ENCODE measurements at regions of chr1 and their contacts with region 1.

Region 1: DNA sequence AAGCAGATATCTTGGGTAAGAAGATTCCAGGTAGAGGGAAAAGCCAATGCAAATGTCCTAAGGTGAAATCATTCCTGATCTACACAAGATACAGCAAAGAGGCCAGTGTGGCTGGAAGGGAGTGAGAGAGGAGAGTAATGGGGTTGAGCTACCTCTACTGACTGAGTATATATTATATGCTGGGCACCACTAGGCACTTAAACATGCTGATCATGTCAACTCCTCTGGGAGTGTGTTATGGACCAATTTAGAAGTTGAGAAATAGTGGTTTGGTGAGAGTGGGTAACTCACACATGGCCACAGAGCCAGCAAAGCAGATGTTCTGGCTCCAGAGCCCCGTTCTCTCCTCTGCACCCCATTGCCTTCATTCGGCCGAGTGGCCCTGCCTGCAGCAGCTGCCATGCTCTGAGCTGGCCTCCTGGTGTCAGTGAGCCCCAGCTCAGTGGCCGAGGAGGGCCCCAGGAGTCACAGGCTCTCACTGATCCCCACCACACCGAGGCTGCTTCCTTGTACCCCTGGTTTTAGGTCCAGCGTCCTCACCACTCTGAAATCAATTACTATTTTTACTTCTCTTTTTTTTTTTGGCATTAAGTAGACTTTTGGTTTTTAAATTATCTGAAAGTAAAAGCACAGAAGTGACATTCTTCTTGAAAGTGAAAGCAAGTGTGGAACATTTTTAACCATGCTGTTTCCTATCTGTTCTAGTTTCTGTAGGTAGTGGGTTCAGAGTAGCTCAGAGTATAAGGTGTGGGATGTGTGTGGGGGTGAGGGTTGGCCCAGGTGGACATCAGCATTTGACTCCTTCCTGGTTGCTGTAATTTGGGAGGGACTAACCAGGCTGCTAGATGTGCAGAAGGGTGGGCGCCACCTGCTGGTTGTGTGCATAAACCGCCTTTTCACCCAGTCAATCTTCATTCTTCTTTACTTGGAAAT is 45.8 kb upstream of the CRNN start:
- DNase-seq: peak; percentile 85
- H3K4me3 Mint-ChIP-seq: no peak overlapping the region
- H3K27ac Mint-ChIP-seq: no peak overlapping the region
- H3K4me1 Mint-ChIP-seq: peaks cover 17% of the 10 kb centered on the region
- H3K27me3 Mint-ChIP-seq: no peaks in the 10 kb centered on the region
- CTCF ChIP-seq: peak; percentile 87

Region 2: GRCh38 chr1:152047730-152048402 is 412.0 kb before region 1 on chr1:
- CTCF ChIA-PET with region 1: interaction called, 39 read pairs
- POLR2A ChIA-PET with region 1: interaction called, 4 read pairs
- intact Hi-C with region 1: loop called (anchors 1 kb)
- DNase-seq: peak; percentile 100
- H3K4me3 Mint-ChIP-seq: peak overlapping the region; percentile 62
- H3K27ac Mint-ChIP-seq: peak overlapping the region; percentile 98
- H3K4me1 Mint-ChIP-seq: peaks cover 55% of the 10 kb centered on the region
- H3K27me3 Mint-ChIP-seq: no peaks in the 10 kb centered on the region
- CTCF ChIP-seq: peak; percentile 58

Region 3: DNA sequence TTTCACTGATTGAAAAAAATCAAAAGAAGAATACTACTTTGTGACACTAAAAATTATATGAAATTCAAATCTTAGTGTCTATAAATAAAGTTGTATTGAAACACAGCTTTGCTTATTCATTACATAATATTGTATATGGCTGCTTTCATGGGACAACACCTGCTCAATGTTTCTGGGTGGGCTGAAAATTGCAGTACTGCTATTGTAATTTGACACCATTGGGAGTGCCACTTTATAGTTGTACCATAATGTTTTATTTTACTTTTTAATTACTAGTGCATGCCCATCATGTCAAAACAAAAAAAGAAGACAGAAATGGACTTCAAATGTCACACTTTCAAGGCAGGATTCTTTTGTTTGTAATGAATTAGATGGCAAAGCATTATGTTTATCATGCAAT is 284.3 kb before region 1 on chr1:
- CTCF ChIA-PET with region 1: interaction called, 20 read pairs
- POLR2A ChIA-PET with region 1: no interaction called
- intact Hi-C with region 1: no loop called
- DNase-seq: no peak
- H3K4me3 Mint-ChIP-seq: no peak overlapping the region
- H3K27ac Mint-ChIP-seq: no peak overlapping the region
- H3K4me1 Mint-ChIP-seq: peaks cover 12% of the 10 kb centered on the region
- H3K27me3 Mint-ChIP-seq: no peaks in the 10 kb centered on the region
- CTCF ChIP-seq: no peak

Region 4: DNA sequence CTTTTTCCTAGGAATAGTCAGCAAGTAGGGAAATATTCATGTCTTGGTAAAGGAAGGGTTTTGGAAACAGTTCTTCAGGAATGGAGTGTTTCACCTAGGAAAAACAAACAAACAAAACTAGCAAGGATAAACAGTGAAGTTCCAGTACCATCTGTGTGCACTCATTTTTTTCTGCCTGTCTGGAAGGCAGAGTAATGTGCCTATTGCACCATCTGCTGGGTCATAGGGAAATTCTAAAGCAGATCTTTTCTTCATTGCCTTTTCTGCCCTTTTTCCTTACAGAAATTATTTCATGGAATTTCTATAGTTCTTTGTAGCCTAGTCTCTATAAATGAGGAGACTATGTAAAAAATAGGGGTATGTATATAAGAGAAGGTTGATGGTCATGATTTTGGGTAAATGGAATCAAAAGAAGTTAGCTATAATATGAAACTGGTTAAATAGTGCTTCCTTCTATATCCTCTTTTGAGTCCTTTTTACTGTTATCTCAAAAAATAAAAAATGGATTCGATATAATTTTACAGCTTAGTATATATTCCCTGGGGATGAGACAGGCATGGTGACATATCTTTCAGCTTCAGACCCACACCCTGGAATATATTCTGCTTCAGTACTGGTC is 232.4 kb before region 1 on chr1:
- CTCF ChIA-PET with region 1: interaction called, 64 read pairs
- POLR2A ChIA-PET with region 1: interaction called, 8 read pairs
- intact Hi-C with region 1: loop called (anchors 1 kb)
- DNase-seq: peak; percentile 66
- H3K4me3 Mint-ChIP-seq: no peak overlapping the region
- H3K27ac Mint-ChIP-seq: no peak overlapping the region
- H3K4me1 Mint-ChIP-seq: peaks cover 17% of the 10 kb centered on the region
- H3K27me3 Mint-ChIP-seq: no peaks in the 10 kb centered on the region
- CTCF ChIP-seq: peak; percentile 79

Region 5: GRCh38 chr1:152386940-152387339 is 72.9 kb before region 1 on chr1:
- CTCF ChIA-PET with region 1: interaction called, 82 read pairs
- POLR2A ChIA-PET with region 1: no interaction called
- intact Hi-C with region 1: no loop called
- DNase-seq: peak; percentile 26
- H3K4me3 Mint-ChIP-seq: no peak overlapping the region
- H3K27ac Mint-ChIP-seq: no peak overlapping the region
- H3K4me1 Mint-ChIP-seq: peaks cover 20% of the 10 kb centered on the region
- H3K27me3 Mint-ChIP-seq: peaks cover 89% of the 10 kb centered on the region
- CTCF ChIP-seq: no peak

Region 6: GRCh38 chr1:152473887-152474537 is 14.2 kb after region 1 on chr1:
- CTCF ChIA-PET with region 1: interaction called, 47 read pairs
- POLR2A ChIA-PET with region 1: interaction called, 6 read pairs
- intact Hi-C with region 1: no loop called
- DNase-seq: peak; percentile 36
- H3K4me3 Mint-ChIP-seq: no peak overlapping the region
- H3K27ac Mint-ChIP-seq: peak overlapping the region; percentile 28
- H3K4me1 Mint-ChIP-seq: peaks cover 15% of the 10 kb centered on the region
- H3K27me3 Mint-ChIP-seq: no peaks in the 10 kb centered on the region
- CTCF ChIP-seq: no peak

Region 7: GRCh38 chr1:152515434-152515783 is 55.5 kb after region 1 on chr1:
- CTCF ChIA-PET with region 1: interaction called, 15 read pairs
- POLR2A ChIA-PET with region 1: no interaction called
- intact Hi-C with region 1: no loop called
- DNase-seq: no peak
- H3K4me3 Mint-ChIP-seq: no peak overlapping the region
- H3K27ac Mint-ChIP-seq: no peak overlapping the region
- H3K4me1 Mint-ChIP-seq: peaks cover 15% of the 10 kb centered on the region
- H3K27me3 Mint-ChIP-seq: no peaks in the 10 kb centered on the region
- CTCF ChIP-seq: no peak

Region 8: DNA sequence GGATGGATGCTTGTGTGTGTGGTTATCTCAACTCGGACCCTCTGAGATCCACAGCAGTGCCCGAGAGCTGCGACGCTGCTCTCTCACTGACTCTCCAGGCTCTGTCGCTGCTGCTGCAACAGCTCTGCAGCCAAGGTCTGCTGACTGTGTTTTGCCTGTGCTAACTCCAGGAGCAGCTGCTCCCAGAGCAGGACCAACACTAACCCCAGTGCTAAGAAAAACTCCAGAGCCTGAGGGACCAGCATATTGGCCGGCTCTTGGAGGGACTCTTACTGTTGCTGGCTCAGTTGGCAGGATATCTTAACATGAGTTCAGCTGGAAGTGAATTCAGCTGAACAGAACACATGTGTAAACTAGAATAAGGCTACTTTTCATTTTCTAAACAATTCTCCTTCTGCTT is 219.6 kb after region 1 on chr1:
- CTCF ChIA-PET with region 1: no interaction called
- POLR2A ChIA-PET with region 1: no interaction called
- intact Hi-C with region 1: no loop called
- DNase-seq: no peak
- H3K4me3 Mint-ChIP-seq: no peak overlapping the region
- H3K27ac Mint-ChIP-seq: no peak overlapping the region
- H3K4me1 Mint-ChIP-seq: no peaks in the 10 kb centered on the region
- H3K27me3 Mint-ChIP-seq: peaks cover 37% of the 10 kb centered on the region
- CTCF ChIP-seq: no peak

Measured in MCF 10A (cell line).